OCI-LY7 (cell line): ENCODE measurements at regions of chr17 and their contacts with region 1.

Region 1: GRCh38 chr17:81484195-81484979 is 28.2 kb downstream of the ACTG1 start:
- DNase-seq: peak; percentile 98
- H3K4me3 ChIP-seq: peak overlapping the region; percentile 61
- H3K27ac ChIP-seq: no peak overlapping the region
- H3K4me1 ChIP-seq: peaks cover 55% of the 10 kb centered on the region
- CTCF ChIP-seq: peak; percentile 99

Region 2: DNA sequence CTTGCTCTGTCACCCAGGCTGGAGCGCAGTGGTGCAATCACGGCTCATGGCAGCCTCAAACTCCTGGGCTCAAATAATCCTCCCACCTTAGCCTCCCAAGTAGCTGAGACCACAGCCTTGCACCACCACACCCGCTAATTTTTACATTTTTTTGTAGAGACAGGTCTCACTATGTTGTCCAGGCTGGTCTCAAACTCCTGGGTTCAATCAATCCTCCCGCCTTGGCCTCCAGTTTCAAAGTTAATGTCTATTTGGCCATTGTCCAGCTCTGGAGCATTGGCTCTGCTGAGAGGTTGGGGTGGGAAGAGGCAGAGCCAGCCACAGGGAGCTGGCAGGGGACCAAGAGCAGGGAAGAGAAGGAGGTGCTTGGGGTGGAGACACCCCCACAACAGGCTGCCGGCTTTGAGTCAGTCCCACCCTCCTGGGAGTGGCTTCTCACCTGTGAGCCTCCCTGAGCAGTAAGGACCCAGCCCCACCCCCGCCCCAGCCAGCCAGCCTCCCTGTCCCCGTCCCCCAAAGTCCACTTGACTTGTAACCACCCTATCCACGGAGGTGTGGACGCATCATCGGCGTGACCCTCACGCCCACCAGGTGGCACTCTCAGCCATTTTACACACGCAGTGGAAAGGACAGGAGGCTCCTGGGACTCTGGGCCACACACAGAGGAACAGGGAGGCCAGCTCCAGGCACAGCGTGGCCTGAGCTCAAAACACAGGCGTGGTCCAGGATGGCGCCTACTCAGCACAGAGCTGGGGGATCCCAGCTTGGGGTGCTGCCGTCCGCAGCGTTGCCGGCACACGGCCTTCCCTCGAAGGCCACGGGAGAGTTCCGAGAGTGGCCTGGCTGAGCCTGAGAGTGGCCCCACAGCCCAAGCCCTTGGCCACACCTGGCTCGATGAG is 341.8 kb before region 1 on chr17:
- CTCF ChIA-PET with region 1: no interaction called
- POLR2A ChIA-PET with region 1: no interaction called
- intact Hi-C with region 1: loop called (anchors 5 kb)
- DNase-seq: peak; percentile 81
- H3K4me3 ChIP-seq: no peak overlapping the region
- H3K27ac ChIP-seq: no peak overlapping the region
- H3K4me1 ChIP-seq: no peaks in the 10 kb centered on the region
- CTCF ChIP-seq: peak; percentile 83

Region 3: DNA sequence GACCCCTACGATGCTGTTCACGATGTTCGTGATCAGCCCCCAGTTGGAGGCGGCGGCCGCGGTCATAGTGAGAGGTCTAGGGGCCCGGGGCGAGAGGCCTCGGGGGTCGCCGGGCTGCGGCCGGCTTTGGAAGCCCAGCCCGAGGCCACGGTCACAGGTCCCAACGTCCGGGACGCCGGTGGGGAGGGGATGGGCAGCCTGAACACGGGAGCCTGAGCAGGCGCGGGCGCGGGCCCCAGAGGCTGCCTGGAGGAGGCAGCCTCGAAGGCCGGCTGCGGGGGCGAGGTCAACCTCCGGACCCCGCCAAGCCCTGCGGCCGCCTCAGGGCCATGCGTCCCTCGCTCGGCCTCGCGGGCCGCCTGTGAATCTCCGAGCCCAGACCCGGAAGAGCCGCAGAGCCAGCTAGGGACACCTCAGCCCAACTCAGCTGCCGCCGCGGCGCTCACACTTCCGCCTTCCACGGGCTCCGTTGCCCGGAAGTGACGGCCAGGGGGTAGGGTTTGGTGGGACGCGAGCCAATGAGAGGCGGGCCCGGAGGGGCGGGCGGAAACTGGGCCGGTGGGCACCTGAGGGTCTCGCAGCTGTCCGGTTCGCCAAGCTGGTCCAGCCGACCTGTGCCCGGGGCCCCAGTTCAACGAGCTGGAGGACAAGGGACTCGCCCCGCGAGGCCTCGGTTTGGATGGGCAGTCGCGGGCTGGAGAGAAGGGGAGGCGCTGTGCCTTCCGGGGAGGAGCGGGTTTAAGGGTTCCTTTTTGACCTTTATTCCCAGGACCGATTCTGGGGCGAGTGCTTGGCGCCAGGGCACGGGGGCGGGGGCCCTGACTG is 189.3 kb before region 1 on chr17 and contains the start of gene SLC38A10:
- CTCF ChIA-PET with region 1: interaction called, 7 read pairs
- POLR2A ChIA-PET with region 1: no interaction called
- intact Hi-C with region 1: loop called (anchors 1 kb)
- DNase-seq: peak; percentile 95
- H3K4me3 ChIP-seq: peak within 1 kb of the TSS; percentile 78
- H3K27ac ChIP-seq: peak within 1 kb of the TSS; percentile 49
- H3K4me1 ChIP-seq: peaks cover 28% of the 10 kb centered on the region
- CTCF ChIP-seq: peak; percentile 37; the same call in 1 of the 2 replicates
- total RNA-seq, gene SLC38A10: 50.5 and 56.0 TPM in 2 replicates

Region 4: DNA sequence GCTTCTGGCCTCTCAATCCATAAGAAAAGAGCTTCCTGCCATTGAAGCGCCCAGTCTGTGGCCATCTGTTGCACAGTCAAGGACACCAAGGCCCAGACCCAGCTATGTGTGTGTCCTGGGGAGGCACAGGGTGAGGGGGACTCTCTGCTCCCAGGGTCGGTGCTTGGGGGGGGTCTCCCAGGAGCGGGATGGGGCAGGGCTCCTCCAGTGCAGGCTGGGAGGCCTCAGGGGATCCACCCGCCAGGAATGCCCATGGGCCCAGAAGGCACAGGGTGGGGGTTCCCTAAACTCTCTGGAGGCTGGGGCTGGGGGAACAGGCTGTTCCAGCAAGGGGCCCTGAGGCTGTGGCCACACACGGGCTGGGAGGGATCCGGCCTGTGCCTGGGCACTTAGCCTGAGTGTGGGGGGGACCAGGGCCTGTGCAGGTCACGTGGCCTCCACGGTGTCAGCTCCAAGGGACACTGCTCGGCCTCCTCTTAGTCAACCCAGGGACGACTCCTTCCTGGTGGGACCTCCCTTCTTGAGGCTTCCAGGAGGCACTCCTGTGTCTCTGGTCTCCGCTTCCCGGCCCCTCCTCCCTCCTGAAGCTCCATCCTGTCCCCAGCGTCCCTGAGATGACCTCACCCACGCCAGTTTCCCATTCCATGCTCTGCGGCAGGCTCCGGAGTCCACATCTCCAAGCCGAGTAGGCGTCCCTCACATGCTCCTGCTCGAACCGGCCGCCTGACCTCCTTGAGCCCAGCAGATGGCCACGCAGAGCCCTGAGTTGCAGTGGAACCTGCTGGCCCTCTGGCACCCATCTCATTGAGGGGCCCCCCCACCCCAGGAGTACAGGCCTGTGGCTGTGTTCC is 112.3 kb before region 1 on chr17:
- CTCF ChIA-PET with region 1: no interaction called
- POLR2A ChIA-PET with region 1: no interaction called
- intact Hi-C with region 1: loop called (anchors 1 kb)
- DNase-seq: no peak
- H3K4me3 ChIP-seq: no peak overlapping the region
- H3K27ac ChIP-seq: no peak overlapping the region
- H3K4me1 ChIP-seq: no peaks in the 10 kb centered on the region
- CTCF ChIP-seq: 0 out of 2 replicates have a peak, but pooled peaks have one; percentile 18

Region 5: GRCh38 chr17:81394921-81395599 is 89.3 kb before region 1 on chr17 and contains the start of gene BAHCC1:
- CTCF ChIA-PET with region 1: interaction called, 7 read pairs
- POLR2A ChIA-PET with region 1: interaction called, 8 read pairs
- intact Hi-C with region 1: loop called (anchors 2 kb)
- DNase-seq: peak; percentile 100
- H3K4me3 ChIP-seq: peak within 1 kb of the TSS; percentile 74
- H3K27ac ChIP-seq: peak within 1 kb of the TSS; percentile 75
- H3K4me1 ChIP-seq: peaks cover 42% of the 10 kb centered on the region
- CTCF ChIP-seq: no peak
- total RNA-seq, gene BAHCC1: 1.4 and 5.2 TPM in 2 replicates

Region 6: GRCh38 chr17:81440876-81441244 is 43.5 kb before region 1 on chr17:
- CTCF ChIA-PET with region 1: interaction called, 3 read pairs
- POLR2A ChIA-PET with region 1: no interaction called
- intact Hi-C with region 1: loop called (anchors 1 kb)
- DNase-seq: peak; percentile 81
- H3K4me3 ChIP-seq: no peak overlapping the region
- H3K27ac ChIP-seq: no peak overlapping the region
- H3K4me1 ChIP-seq: peaks cover 9% of the 10 kb centered on the region
- CTCF ChIP-seq: peak; percentile 95

Region 7: DNA sequence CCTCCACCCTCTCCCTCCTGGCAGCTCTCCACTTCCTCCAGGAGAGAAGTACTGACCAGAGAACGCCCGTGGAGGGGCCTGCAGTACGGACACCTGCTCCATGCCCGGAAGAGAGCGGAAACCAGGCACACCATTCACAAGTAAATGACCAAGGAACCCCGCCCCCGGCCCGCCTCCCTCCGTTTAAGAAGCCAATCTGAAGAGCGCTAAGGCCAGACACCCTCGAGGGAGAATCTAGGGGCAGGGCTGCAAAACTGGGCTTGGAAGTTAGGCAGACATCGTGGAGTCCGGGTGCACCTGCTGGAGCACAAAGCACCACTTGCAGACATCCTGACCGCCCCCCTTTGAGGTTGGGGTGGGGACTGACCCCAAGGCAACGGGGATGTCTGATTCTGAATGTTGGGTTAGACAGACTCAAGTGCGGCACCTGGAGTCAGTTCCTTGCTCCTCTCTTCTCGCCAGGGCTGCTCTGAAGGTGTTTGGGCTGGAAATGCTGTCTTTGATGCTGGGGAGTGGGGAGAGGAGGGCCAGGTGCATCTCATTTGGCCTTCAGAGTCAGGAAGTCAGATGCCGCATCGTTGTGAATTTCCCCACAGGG is 68.7 kb after region 1 on chr17:
- CTCF ChIA-PET with region 1: no interaction called
- POLR2A ChIA-PET with region 1: no interaction called
- intact Hi-C with region 1: loop called (anchors 2 kb)
- DNase-seq: peak; percentile 94
- H3K4me3 ChIP-seq: peak overlapping the region; percentile 88
- H3K27ac ChIP-seq: peak overlapping the region; percentile 80
- H3K4me1 ChIP-seq: peaks cover 30% of the 10 kb centered on the region
- CTCF ChIP-seq: peak; percentile 59